ENCODE measurements at regions of chr4 and their contacts with region 1.

Region 1: DNA sequence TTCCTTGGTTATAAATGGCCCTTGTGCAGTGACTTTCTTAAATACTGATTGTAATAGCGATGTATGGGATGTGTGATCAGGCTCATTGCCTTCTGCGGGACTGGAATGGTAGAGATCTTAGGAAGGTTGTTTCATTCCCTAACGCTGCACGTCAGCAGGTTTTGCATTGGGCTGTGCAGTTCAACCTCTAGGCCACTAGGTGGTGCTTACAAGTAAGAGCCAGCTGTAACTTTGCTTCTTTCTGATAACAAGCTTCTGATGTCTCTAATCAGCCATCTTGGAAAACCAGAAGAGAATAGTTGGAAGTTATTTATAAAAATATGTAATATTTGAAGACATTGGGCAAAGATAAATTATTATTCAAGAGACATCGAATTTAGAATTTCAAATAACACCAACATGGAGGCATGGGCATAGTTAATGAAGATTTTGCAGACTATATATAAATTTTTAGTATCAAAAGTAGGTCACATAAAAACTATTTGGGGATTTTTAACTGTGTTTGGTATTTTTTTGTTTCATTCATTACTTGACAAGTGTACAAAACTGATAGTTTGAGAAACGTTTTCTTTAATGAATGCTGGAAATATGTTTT is 339.7 kb upstream of the PCDH7 start:
- DNase-seq: peak; percentile 71 to 72
- H3K4me3 ChIP-seq: no peak overlapping the region
- H3K4me3 Mint-ChIP-seq: no peak overlapping the region
- H3K27ac Mint-ChIP-seq: no peak overlapping the region
- H3K4me1 ChIP-seq: no peaks in the 10 kb centered on the region
- H3K4me1 Mint-ChIP-seq: no peaks in the 10 kb centered on the region
- H3K27me3 ChIP-seq: no peaks in the 10 kb centered on the region
- H3K27me3 Mint-ChIP-seq: peaks cover 2% of the 10 kb centered on the region
- CTCF ChIP-seq: peak; percentile 87 to 89

Region 2: GRCh38 chr4:30396772-30397475 is 16.4 kb after region 1 on chr4:
- CTCF ChIA-PET with region 1: interaction called, 6 read pairs
- POLR2A ChIA-PET with region 1: no interaction called
- intact Hi-C with region 1: loop called (anchors 1 kb)
- DNase-seq: no peak
- H3K4me3 ChIP-seq: no peak overlapping the region
- H3K4me3 Mint-ChIP-seq: no peak overlapping the region
- H3K27ac Mint-ChIP-seq: no peak overlapping the region
- H3K4me1 ChIP-seq: peaks cover 38% of the 10 kb centered on the region
- H3K4me1 Mint-ChIP-seq: peaks cover 28% of the 10 kb centered on the region
- H3K27me3 ChIP-seq: no peaks in the 10 kb centered on the region
- H3K27me3 Mint-ChIP-seq: no peaks in the 10 kb centered on the region
- CTCF ChIP-seq: no peak

Region 3: GRCh38 chr4:30559481-30559880 is 179.0 kb after region 1 on chr4:
- CTCF ChIA-PET with region 1: no interaction called
- POLR2A ChIA-PET with region 1: no interaction called
- intact Hi-C with region 1: loop called (anchors 5 kb)
- DNase-seq: no peak
- H3K4me3 ChIP-seq: no peak overlapping the region
- H3K4me3 Mint-ChIP-seq: no peak overlapping the region
- H3K27ac Mint-ChIP-seq: no peak overlapping the region
- H3K4me1 ChIP-seq: no peaks in the 10 kb centered on the region; the same call in 1 of the 2 replicates
- H3K4me1 Mint-ChIP-seq: peaks cover 12% of the 10 kb centered on the region
- H3K27me3 ChIP-seq: no peaks in the 10 kb centered on the region
- H3K27me3 Mint-ChIP-seq: no peaks in the 10 kb centered on the region
- CTCF ChIP-seq: no peak

Region 4: GRCh38 chr4:30619679-30620078 is 239.2 kb after region 1 on chr4:
- CTCF ChIA-PET with region 1: no interaction called
- POLR2A ChIA-PET with region 1: no interaction called
- intact Hi-C with region 1: no loop called
- DNase-seq: no peak
- H3K4me3 ChIP-seq: no peak overlapping the region
- H3K4me3 Mint-ChIP-seq: no peak overlapping the region
- H3K27ac Mint-ChIP-seq: no peak overlapping the region
- H3K4me1 ChIP-seq: 0 out of 2 replicates have a peak, but pooled peaks cover 5% of the 10 kb centered on the region
- H3K4me1 Mint-ChIP-seq: peaks cover 7% of the 10 kb centered on the region
- H3K27me3 ChIP-seq: no peaks in the 10 kb centered on the region; the same call in 1 of the 2 replicates
- H3K27me3 Mint-ChIP-seq: no peaks in the 10 kb centered on the region
- CTCF ChIP-seq: no peak

Region 5: DNA sequence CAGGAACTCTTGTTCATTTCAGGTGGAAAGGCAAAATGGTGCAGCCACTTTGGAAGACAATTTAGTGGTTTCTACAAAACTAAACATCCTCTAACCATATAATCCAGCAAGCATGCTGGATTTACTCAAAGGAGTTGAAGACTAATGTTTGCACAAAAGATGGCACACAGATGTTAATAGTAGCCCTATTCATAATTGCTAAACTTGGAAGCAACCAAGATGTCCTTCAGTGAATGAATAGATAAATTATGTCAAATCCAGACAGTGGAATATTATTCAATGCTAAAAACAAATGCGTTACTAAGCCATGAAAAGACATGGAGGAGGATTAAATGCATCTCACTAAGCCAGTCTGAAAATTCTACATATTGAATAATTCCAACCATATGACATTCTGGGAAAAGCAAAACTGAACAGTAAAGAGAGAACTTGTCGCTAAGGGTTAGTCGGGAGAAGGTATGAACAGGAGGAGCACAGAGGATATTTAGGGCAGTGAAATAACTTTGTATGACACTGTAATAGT is 291.5 kb after region 1 on chr4:
- CTCF ChIA-PET with region 1: no interaction called
- POLR2A ChIA-PET with region 1: no interaction called
- intact Hi-C with region 1: loop called (anchors 1 kb)
- DNase-seq: no peak
- H3K4me3 ChIP-seq: no peak overlapping the region
- H3K4me3 Mint-ChIP-seq: no peak overlapping the region
- H3K27ac Mint-ChIP-seq: no peak overlapping the region
- H3K4me1 ChIP-seq: no peaks in the 10 kb centered on the region
- H3K4me1 Mint-ChIP-seq: no peaks in the 10 kb centered on the region
- H3K27me3 ChIP-seq: no peaks in the 10 kb centered on the region
- H3K27me3 Mint-ChIP-seq: no peaks in the 10 kb centered on the region
- CTCF ChIP-seq: no peak

Measured in Caco-2 (cell line).